Activated CD8-positive, alpha-beta T cell treated with anti-CD3 and anti-CD28 coated beads, Interleukin-2, amount 10 ng/mL, durations not matched to agents 7 days and 5 days (primary cell): ENCODE measurements at regions of chr1 and their contacts with region 1.

Region 1: GRCh38 chr1:36285448-36286101 is 20.6 kb upstream of the SH3D21 start:
- DNase-seq: peak; percentile 82
- ATAC-seq: peak; percentile 94
- H3K4me3 Mint-ChIP-seq: no peak overlapping the region
- H3K27ac Mint-ChIP-seq: peak overlapping the region; percentile 15
- H3K4me1 Mint-ChIP-seq: peaks cover 22% of the 10 kb centered on the region
- H3K27me3 Mint-ChIP-seq: no peaks in the 10 kb centered on the region

Region 2: GRCh38 chr1:35988237-35988636 is 297.3 kb before region 1 on chr1:
- CTCF ChIA-PET with region 1: no interaction called
- POLR2A ChIA-PET with region 1: no interaction called
- DNase-seq: no peak
- ATAC-seq: no peak
- H3K4me3 Mint-ChIP-seq: no peak overlapping the region
- H3K27ac Mint-ChIP-seq: no peak overlapping the region
- H3K4me1 Mint-ChIP-seq: no peaks in the 10 kb centered on the region
- H3K27me3 Mint-ChIP-seq: no peaks in the 10 kb centered on the region

Region 3: GRCh38 chr1:36155408-36156328 is 129.9 kb before region 1 on chr1 and contains the start of gene MAP7D1:
- CTCF ChIA-PET with region 1: interaction called, 77 read pairs
- POLR2A ChIA-PET with region 1: interaction called, 14 read pairs
- DNase-seq: peak; percentile 85
- ATAC-seq: peak; percentile 72
- H3K4me3 Mint-ChIP-seq: peak within 1 kb of the TSS; percentile 92
- H3K27ac Mint-ChIP-seq: peak within 1 kb of the TSS; percentile 94
- H3K4me1 Mint-ChIP-seq: peaks cover 74% of the 10 kb centered on the region
- H3K27me3 Mint-ChIP-seq: no peaks in the 10 kb centered on the region
- total RNA-seq, gene MAP7D1: 235 to 245 TPM

Region 4: DNA sequence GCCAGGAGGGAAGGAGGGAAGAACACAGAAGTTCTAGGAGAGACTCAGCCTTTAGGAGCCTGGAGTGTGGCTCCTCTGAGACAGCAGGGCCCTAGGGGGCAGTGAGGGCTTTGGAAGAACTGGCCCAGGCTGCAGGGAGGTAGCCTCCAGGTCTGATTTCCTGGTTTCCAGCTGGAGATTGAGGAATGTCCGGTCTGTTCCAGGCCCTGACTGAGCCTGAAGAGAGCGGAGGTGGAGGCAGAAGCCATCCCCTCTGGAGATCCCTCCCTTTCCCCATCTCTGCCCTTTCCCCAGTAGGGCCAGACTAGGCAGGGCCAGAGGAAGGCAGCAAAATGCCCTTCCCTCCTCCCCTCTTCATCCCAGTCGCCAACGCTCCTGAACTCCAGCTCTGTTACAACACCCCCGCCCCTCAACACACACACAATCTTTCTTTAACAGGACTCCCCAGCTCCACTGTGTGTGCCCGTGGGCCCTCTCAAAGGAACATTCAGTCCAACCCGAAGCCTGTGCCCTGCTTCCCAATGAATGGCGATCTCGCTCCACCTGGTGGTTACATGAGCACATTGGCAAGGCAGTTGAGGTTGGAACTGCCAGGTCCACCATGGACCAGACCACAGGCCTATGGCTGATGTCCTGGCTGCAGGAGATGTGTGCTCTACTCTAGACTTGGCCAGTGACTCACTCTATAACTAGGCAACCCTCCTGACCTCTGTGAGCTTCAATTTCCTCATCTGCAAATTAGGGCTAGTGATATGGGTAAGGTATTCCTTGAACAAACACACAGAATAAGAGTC is 97.6 kb before region 1 on chr1:
- CTCF ChIA-PET with region 1: interaction called, 32 read pairs
- POLR2A ChIA-PET with region 1: no interaction called
- DNase-seq: peak; percentile 87
- ATAC-seq: peak; percentile 99
- H3K4me3 Mint-ChIP-seq: no peak overlapping the region
- H3K27ac Mint-ChIP-seq: peak overlapping the region; percentile 73
- H3K4me1 Mint-ChIP-seq: peaks cover 5% of the 10 kb centered on the region
- H3K27me3 Mint-ChIP-seq: no peaks in the 10 kb centered on the region

Region 5: DNA sequence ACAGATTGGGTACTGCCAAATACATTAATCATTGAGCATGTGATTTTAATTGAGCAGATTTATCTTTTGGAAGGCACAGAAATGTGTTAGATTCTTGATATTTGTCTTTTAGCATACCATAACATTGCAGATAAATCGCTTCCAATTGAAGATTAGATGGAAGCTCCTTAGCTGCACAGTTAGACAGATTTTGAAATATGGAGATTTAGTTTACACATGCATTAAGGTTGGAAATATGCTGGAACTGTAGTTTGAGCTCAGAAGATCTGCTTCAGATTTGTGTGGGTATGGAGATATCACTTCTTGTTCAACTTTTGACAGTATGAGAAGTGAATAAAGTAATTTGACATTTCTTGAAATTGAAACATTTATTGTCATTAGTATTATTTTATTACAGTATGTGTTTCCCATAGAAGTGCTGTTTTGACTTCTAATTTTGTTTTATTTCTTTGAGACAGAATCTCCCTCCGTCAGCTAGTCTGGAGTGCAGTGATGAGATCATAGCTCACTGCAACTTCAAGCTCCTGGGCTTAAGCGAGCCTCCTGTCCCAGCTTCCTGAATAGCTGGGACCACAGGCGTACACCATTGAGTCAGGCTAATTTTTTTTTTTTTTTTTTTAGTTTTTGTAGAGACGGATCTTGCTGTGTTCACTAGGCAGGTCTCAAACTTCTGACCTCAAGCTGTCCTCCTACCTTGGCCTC is 32.3 kb before region 1 on chr1:
- CTCF ChIA-PET with region 1: interaction called, 10 read pairs
- POLR2A ChIA-PET with region 1: no interaction called
- DNase-seq: no peak
- ATAC-seq: no peak
- H3K4me3 Mint-ChIP-seq: no peak overlapping the region
- H3K27ac Mint-ChIP-seq: peak overlapping the region; percentile 25
- H3K4me1 Mint-ChIP-seq: peaks cover 24% of the 10 kb centered on the region
- H3K27me3 Mint-ChIP-seq: no peaks in the 10 kb centered on the region

Region 6: GRCh38 chr1:36306902-36307456 is 21.4 kb after region 1 on chr1:
- CTCF ChIA-PET with region 1: interaction called, 24 read pairs
- POLR2A ChIA-PET with region 1: no interaction called
- DNase-seq: peak; percentile 95
- ATAC-seq: peak; percentile 99
- H3K4me3 Mint-ChIP-seq: peak overlapping the region; percentile 98
- H3K27ac Mint-ChIP-seq: peak overlapping the region; percentile 91
- H3K4me1 Mint-ChIP-seq: peaks cover 29% of the 10 kb centered on the region
- H3K27me3 Mint-ChIP-seq: no peaks in the 10 kb centered on the region